ENCODE measurements at regions of chr17 and their contacts with region 1.

Region 1: GRCh38 chr17:80279895-80280294 is 19.2 kb downstream of the RNF213 start:
- DNase-seq: peak; percentile 90
- H3K4me3 Mint-ChIP-seq: peak overlapping the region; percentile 72
- H3K27ac Mint-ChIP-seq: peak overlapping the region; percentile 19
- H3K4me1 Mint-ChIP-seq: peaks cover 35% of the 10 kb centered on the region
- H3K27me3 Mint-ChIP-seq: no peaks in the 10 kb centered on the region
- CTCF ChIP-seq: no peak

Region 2: DNA sequence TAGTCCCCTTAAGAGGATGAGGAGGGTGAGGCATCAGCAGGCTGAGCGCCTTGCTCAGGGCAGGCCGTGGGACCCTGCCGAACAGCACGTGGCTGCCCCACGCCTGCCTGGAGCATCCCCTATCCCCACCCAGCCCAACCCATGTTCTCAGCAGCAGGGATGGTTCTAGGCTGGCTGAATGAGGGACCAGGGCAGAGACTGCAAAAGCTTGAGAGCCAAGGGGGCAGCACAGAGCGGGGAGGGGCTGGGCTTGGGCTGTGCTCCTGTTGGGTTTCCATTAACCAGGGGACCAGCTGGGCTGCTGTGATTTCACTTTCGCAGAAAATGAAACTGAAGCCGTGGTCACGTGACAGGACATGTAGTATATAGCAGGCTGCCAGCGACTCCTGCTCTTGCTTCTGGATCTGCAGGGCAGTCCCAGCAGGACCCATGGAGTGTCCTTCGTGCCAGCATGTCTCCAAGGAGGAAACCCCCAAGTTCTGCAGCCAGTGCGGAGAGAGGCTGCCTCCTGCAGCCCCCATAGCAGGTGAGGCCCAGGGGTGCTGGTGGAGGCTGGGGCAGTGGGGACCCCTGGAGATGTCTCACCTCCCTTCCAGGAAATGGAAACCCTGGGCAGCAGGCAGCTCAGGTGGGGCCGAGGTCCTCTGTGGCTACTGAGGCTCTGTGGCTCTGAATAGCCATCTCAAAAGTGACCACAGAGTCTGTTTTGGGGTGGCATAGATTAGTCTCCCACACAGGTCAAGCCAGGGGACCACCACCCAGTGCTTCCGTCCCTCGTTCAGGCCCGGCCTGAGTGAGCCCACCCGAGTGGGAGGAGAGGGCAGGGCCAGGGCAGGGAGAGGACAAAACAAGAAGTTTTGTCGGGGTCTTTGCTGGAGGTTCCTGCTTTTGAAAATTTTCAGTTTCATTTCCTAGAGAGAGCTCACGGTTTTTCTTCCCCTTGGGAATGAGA is 16.4 kb before region 1 on chr17:
- CTCF ChIA-PET with region 1: no interaction called
- POLR2A ChIA-PET with region 1: interaction called, 37 read pairs
- intact Hi-C with region 1: loop called (anchors 1 kb)
- DNase-seq: no peak
- H3K4me3 Mint-ChIP-seq: peak overlapping the region; percentile 29
- H3K27ac Mint-ChIP-seq: no peak overlapping the region
- H3K4me1 Mint-ChIP-seq: peaks cover 6% of the 10 kb centered on the region
- H3K27me3 Mint-ChIP-seq: no peaks in the 10 kb centered on the region
- CTCF ChIP-seq: no peak

Region 3: GRCh38 chr17:80339118-80339517 is 59.2 kb after region 1 on chr17:
- CTCF ChIA-PET with region 1: no interaction called
- POLR2A ChIA-PET with region 1: no interaction called
- intact Hi-C with region 1: no loop called
- DNase-seq: no peak
- H3K4me3 Mint-ChIP-seq: no peak overlapping the region
- H3K27ac Mint-ChIP-seq: no peak overlapping the region
- H3K4me1 Mint-ChIP-seq: no peaks in the 10 kb centered on the region
- H3K27me3 Mint-ChIP-seq: no peaks in the 10 kb centered on the region
- CTCF ChIP-seq: no peak

Measured in MCF 10A (cell line).